GM12878 (cell line): ENCODE measurements at regions of chr3 and their contacts with region 1.

Region 1: GRCh38 chr3:140216249-140216648 is 281.3 kb downstream of the CLSTN2 start:
- DNase-seq: no peak
- ATAC-seq: peak; percentile 86
- H3K4me3 ChIP-seq: no peak overlapping the region
- H3K27ac ChIP-seq: no peak overlapping the region
- H3K4me1 ChIP-seq: no peaks in the 10 kb centered on the region
- H3K27me3 ChIP-seq: no peaks in the 10 kb centered on the region; a peak in 1 of 4 replicates
- CTCF ChIP-seq: peak; percentile 34 to 73 (median 65)
- EP300 ChIP-seq: no peak
- POLR2A ChIP-seq: no peak
- RAD21 ChIP-seq: peak; percentile 46

Region 2: GRCh38 chr3:139935016-139935865 is 281.0 kb before region 1 on chr3 and contains the start of gene CLSTN2:
- CTCF ChIA-PET with region 1: interaction called, 3 read pairs
- POLR2A ChIA-PET with region 1: no interaction called
- RAD21 ChIA-PET with region 1: no interaction called
- SMC1A ChIA-PET with region 1: interaction called, 7 read pairs
- in situ Hi-C with region 1: no loop called
- intact Hi-C with region 1: loop called (anchors 5 kb)
- DNase-seq: no peak
- ATAC-seq: peak; percentile 51
- H3K4me3 ChIP-seq: no peak within 1 kb of the TSS
- H3K27ac ChIP-seq: no peak within 1 kb of the TSS
- H3K4me1 ChIP-seq: no peaks in the 10 kb centered on the region
- H3K27me3 ChIP-seq: peaks cover 7% of the 10 kb centered on the region in 2 experiments; a peak in 3 of 4 replicates
- CTCF ChIP-seq: no peak
- EP300 ChIP-seq: no peak
- POLR2A ChIP-seq: no peak
- RAD21 ChIP-seq: no peak
- polyA plus RNA-seq, gene CLSTN2: under 0.01 to 0.10 TPM

Region 3: GRCh38 chr3:140164922-140165590 is 51.2 kb before region 1 on chr3:
- CTCF ChIA-PET with region 1: interaction called, 6 read pairs
- POLR2A ChIA-PET with region 1: no interaction called
- RAD21 ChIA-PET with region 1: interaction called, 9 read pairs
- SMC1A ChIA-PET with region 1: interaction called, 8 read pairs
- in situ Hi-C with region 1: no loop called
- intact Hi-C with region 1: loop called (anchors 5 kb)
- DNase-seq: no peak
- ATAC-seq: no peak
- H3K4me3 ChIP-seq: no peak overlapping the region
- H3K27ac ChIP-seq: no peak overlapping the region
- H3K4me1 ChIP-seq: no peaks in the 10 kb centered on the region
- H3K27me3 ChIP-seq: no peaks in the 10 kb centered on the region
- CTCF ChIP-seq: no peak
- EP300 ChIP-seq: no peak
- POLR2A ChIP-seq: no peak
- RAD21 ChIP-seq: no peak

Region 4: DNA sequence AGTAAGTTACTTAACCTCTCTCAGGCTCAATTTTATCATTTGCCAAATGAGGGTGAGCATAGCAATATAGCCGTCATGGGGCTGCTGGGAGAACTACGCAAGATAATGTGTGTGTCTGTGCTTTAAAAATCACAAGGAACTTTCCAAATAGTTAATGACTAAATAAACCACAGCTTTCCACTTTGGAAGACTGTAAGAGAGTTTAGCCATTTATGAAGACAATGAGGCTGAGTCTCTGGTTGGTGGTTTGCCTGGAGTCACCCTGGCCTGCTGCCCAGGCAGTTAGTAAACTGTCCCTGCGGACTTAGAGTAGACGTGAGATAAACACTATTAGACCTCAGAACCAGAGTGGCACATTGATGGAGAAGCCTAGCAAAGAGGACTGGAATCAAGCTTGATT is 76.4 kb after region 1 on chr3:
- CTCF ChIA-PET with region 1: no interaction called
- POLR2A ChIA-PET with region 1: no interaction called
- RAD21 ChIA-PET with region 1: no interaction called
- SMC1A ChIA-PET with region 1: no interaction called
- in situ Hi-C with region 1: no loop called
- intact Hi-C with region 1: no loop called
- DNase-seq: no peak
- ATAC-seq: no peak
- H3K4me3 ChIP-seq: no peak overlapping the region
- H3K27ac ChIP-seq: no peak overlapping the region
- H3K4me1 ChIP-seq: no peaks in the 10 kb centered on the region
- H3K27me3 ChIP-seq: peaks cover 1 to 6% of the 10 kb centered on the region in 2 experiments; a peak in 1 of 4 replicates
- CTCF ChIP-seq: no peak
- EP300 ChIP-seq: no peak
- POLR2A ChIP-seq: no peak
- RAD21 ChIP-seq: no peak